Pancreas (tissue), 10 donors: ENCODE measurements at regions of chr1 and their contacts with region 1.

Region 1: DNA sequence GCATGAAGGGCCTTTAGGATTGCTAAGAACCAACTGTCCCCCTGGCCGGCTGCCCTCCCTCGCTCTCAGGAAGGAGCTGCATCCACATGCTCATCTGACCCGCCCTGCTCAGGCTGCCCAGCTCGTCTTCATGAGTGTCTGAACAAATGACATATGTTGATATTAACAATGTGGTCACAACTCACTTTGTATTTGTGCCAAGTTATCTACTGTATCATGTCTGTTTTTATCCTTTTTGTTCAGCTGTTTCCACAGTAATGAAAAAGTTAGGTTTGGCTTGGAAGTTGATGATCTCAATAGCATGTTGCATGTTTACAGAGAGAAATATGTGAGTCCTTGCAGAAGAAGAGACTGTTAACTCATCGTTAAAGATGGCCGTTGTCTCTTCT is 75.1 kb downstream of the PHTF1 start:
- DNase-seq: peak in 2 of 6 donors; percentile 26 to 30
- ATAC-seq: peak in 3 of 4 donors; percentile 51 to 66 (median 64)
- H3K4me3 ChIP-seq: no peak overlapping the region
- H3K27ac ChIP-seq: peak overlapping the region in 1 of 4 donors; percentile 0
- H3K4me1 ChIP-seq: no peaks in the 10 kb centered on the region
- H3K27me3 ChIP-seq: no peaks in the 10 kb centered on the region
- CTCF ChIP-seq: no peak

Region 2: GRCh38 chr1:113389953-113390834 is 294.0 kb before region 1 on chr1 and contains the start of gene MAGI3:
- intact Hi-C with region 1: loop called in 1 of 3 experiments (anchors 5 kb)
- DNase-seq: peak; percentile 98 to 99 (median 98)
- ATAC-seq: peak; percentile 76 to 89 (median 87)
- H3K4me3 ChIP-seq: peak within 1 kb of the TSS; percentile 68 to 92 (median 90)
- H3K27ac ChIP-seq: peak within 1 kb of the TSS; percentile 73 to 97 (median 92)
- H3K4me1 ChIP-seq: peaks cover 6 to 21% (median 17%) of the 10 kb centered on the region in 3 donors
- H3K27me3 ChIP-seq: no peaks in the 10 kb centered on the region
- CTCF ChIP-seq: no peak
- total RNA-seq, gene MAGI3: 11.5 to 24.2 (median 16.4) TPM